Endothelial cell of umbilical vein (primary cell): ENCODE measurements at regions of chr17 and their contacts with region 1.

Region 1: GRCh38 chr17:48351831-48352332 is 78.1 kb downstream of the SKAP1 start:
- DNase-seq: peak; percentile 69
- H3K4me3 ChIP-seq: no peak overlapping the region
- H3K27ac ChIP-seq: no peak overlapping the region
- H3K4me1 ChIP-seq: no peaks in the 10 kb centered on the region
- H3K27me3 ChIP-seq: peaks cover 2 to 4% of the 10 kb centered on the region in 2 experiments
- CTCF ChIP-seq: peak; percentile 28 to 42
- POLR2A ChIP-seq: no peak

Region 2: GRCh38 chr17:48335858-48336500 is 15.9 kb before region 1 on chr17:
- CTCF ChIA-PET with region 1: interaction called, 42 read pairs
- POLR2A ChIA-PET with region 1: no interaction called
- dilution Hi-C with region 1: no loop called
- intact Hi-C with region 1: no loop called
- DNase-seq: peak; percentile 87
- H3K4me3 ChIP-seq: no peak overlapping the region
- H3K27ac ChIP-seq: no peak overlapping the region
- H3K4me1 ChIP-seq: no peaks in the 10 kb centered on the region
- H3K27me3 ChIP-seq: peaks cover 0 to 3% of the 10 kb centered on the region in 2 experiments
- CTCF ChIP-seq: peak; percentile 47 to 55
- POLR2A ChIP-seq: no peak

Region 3: GRCh38 chr17:48457080-48457836 is 105.4 kb after region 1 on chr17:
- CTCF ChIA-PET with region 1: interaction called, 21 read pairs
- POLR2A ChIA-PET with region 1: no interaction called
- dilution Hi-C with region 1: no loop called
- intact Hi-C with region 1: loop called (anchors 1 kb)
- DNase-seq: peak; percentile 70
- H3K4me3 ChIP-seq: no peak overlapping the region
- H3K27ac ChIP-seq: no peak overlapping the region
- H3K4me1 ChIP-seq: no peaks in the 10 kb centered on the region
- H3K27me3 ChIP-seq: peaks cover 40 to 54% of the 10 kb centered on the region in 2 experiments
- CTCF ChIP-seq: peak; percentile 96 to 98
- POLR2A ChIP-seq: no peak

Region 4: DNA sequence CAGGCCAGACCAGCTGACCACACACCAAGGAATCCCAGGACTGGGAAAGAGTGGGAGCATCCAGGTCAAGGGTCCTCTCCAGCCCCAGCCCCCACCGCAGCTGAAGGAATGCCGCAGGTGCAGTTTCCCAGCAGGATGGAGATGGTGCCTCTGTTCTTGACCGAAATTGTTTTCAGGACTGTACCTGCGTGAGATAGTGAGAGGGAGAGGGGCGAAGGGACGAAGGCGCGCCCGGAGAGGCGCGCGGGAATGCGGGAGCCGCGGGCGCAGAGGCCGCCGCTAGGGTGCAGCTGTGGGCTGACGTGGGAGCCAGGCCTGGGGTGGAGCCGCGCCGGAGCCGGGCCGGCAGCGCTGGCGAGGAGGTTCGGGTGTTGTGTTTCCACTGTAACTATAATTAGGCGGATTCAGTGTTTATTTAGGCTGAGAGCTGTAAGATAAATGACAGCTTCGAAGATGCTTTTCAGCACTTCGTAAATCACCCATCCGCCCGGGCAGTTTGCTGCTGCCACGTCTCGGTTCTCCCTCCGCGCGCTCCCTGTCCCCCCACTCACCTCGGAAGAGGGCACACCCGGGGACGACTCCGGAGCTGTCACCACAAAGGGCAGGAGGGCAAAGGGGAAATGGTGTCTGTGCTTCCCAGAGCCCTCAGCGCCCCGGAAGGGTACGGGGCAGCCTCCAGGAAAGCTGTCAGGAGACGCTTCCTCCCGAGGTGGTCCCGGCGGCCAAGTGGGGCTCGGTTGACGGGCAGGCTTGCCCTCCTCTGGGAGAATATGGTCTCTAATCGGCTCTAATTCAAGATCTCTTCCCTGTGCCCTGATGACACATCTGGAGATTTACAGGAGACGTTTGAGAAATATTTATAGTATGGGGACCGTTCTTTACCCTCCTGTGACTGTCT is 140.8 kb after region 1 on chr17:
- CTCF ChIA-PET with region 1: interaction called, 10 read pairs
- POLR2A ChIA-PET with region 1: no interaction called
- dilution Hi-C with region 1: no loop called
- intact Hi-C with region 1: no loop called
- DNase-seq: peak; percentile 62
- H3K4me3 ChIP-seq: peak overlapping the region in 2 of 3 experiments; percentile 10 to 16
- H3K27ac ChIP-seq: no peak overlapping the region
- H3K4me1 ChIP-seq: peaks cover 10% of the 10 kb centered on the region
- H3K27me3 ChIP-seq: peaks cover 2 to 3% of the 10 kb centered on the region in 2 experiments
- CTCF ChIP-seq: peak; percentile 84 to 90
- POLR2A ChIP-seq: no peak

Region 5: GRCh38 chr17:48593840-48594537 is 242.1 kb after region 1 on chr17:
- CTCF ChIA-PET with region 1: interaction called, 23 read pairs
- POLR2A ChIA-PET with region 1: no interaction called
- dilution Hi-C with region 1: no loop called
- intact Hi-C with region 1: no loop called
- DNase-seq: peak; percentile 86
- H3K4me3 ChIP-seq: no peak overlapping the region
- H3K27ac ChIP-seq: peak overlapping the region; percentile 0
- H3K4me1 ChIP-seq: peaks cover 25% of the 10 kb centered on the region
- H3K27me3 ChIP-seq: no peaks in the 10 kb centered on the region
- CTCF ChIP-seq: peak; percentile 95 to 97
- POLR2A ChIP-seq: no peak